ENCODE measurements at regions of chr15 and their contacts with region 1.

Region 1: GRCh38 chr15:38828031-38828532 is 263.5 kb upstream of the RASGRP1 start:
- DNase-seq: no peak
- ATAC-seq: peak in 1 of 4 donors; percentile 83
- H3K4me3 ChIP-seq: no peak overlapping the region
- H3K27ac ChIP-seq: peak overlapping the region in 3 of 12 donors; percentile 22 to 48 (median 27)
- H3K4me1 ChIP-seq: peaks cover 0 to 12% (median 0%) of the 10 kb centered on the region in 12 donors
- H3K27me3 ChIP-seq: no peaks in the 10 kb centered on the region
- CTCF ChIP-seq: no peak
- POLR2A ChIP-seq: no peak

Region 2: DNA sequence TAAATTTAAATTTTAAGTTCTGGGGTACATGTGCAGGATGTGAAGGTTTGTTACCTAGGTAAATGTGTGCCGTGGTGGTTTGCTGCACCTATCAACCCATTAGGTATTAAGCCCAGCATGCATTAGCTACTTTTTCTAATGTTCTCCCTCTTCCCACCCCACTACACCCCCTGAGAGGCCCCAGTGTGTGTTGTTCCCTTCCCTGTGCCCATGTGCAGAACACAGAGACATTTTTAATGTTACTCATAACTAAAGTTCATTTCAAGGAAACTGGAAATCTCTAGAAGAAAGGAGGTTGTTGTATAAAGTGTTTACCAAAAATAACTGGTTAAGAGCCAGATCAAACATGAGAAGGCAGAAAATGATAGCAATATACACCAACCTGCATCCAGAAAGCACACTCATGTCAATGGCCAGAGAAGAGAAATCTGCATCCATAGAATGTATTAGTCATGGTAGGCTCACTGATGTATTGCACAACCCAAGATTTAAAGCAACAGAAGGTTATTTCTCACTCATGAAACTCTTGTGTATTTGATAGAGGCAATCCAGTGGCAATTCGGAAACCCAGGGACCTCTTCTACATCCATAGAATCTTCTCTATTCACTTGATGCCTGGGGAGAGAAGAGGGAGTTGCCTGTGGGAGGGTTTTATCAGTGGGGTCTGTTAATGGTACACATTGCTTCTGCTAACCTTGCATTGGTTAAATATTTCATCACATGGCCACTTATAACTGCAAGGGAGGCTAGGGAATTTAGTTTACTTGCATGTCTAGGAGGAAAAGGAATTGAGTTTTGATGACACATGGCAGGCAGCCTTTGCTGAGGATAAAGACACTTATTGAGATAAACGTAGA is 58.5 kb after region 1 on chr15:
- intact Hi-C with region 1: loop called in 1 of 10 experiments (anchors 10 kb)
- DNase-seq: no peak
- ATAC-seq: no peak
- H3K4me3 ChIP-seq: no peak overlapping the region
- H3K27ac ChIP-seq: no peak overlapping the region
- H3K4me1 ChIP-seq: peaks cover 0 to 9% (median 0%) of the 10 kb centered on the region in 12 donors
- H3K27me3 ChIP-seq: no peaks in the 10 kb centered on the region
- CTCF ChIP-seq: no peak
- POLR2A ChIP-seq: no peak

Region 3: DNA sequence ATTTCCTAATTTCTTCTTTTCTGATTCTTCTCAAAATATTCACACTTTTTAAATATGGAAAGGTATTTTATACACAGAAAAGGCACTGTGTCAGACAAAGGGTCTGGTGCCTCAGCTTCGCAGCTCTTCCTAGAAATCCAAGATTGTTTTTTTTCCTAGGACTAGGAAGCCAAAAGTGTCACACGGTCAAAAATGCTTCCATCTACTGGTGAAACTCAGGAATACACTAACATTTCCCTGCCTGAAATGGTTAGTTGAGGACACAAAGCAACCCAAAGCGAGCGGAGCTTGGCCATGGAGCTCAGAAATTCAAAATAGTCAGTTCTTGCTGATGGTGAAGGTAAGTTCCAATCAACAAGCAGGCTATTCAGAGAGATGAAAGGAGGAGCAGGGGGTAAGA is 163.0 kb after region 1 on chr15:
- intact Hi-C with region 1: loop called in 2 of 10 experiments (anchors 5 to 10 kb)
- DNase-seq: no peak
- ATAC-seq: peak in 1 of 4 donors; percentile 35
- H3K4me3 ChIP-seq: no peak overlapping the region
- H3K27ac ChIP-seq: peak overlapping the region in 6 of 12 donors; percentile 8 to 62 (median 25)
- H3K4me1 ChIP-seq: peaks cover 0 to 31% (median 12%) of the 10 kb centered on the region in 12 donors
- H3K27me3 ChIP-seq: no peaks in the 10 kb centered on the region
- CTCF ChIP-seq: peak in 11 of 12 donors; percentile 20 to 61 (median 46)
- POLR2A ChIP-seq: no peak